ENCODE measurements at regions of chr2 and their contacts with region 1.

Region 1: DNA sequence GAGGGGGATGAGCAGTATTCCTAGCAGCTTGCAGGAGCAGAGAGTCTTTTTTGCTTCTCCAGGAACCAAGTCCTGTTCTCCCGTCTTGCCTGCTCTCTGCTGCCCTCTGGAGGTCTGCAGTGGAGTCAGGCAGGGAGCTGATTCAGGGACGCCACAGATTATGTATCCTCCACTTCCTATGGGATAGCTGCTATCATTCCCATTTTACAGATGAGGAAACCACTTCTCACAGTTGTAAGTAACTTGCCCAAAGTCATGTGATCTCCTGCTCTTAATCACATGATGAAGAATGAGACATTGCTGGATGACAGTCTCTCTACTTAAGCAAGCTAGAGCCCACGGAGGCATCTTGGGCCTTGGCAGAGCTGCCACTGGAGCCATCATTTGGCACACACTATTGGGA is 8.3 kb downstream of the SLC4A5 start:
- DNase-seq: peak; percentile 17
- ATAC-seq: peak; percentile 95
- H3K4me3 ChIP-seq: no peak overlapping the region
- H3K27ac ChIP-seq: no peak overlapping the region
- H3K4me1 ChIP-seq: no peaks in the 10 kb centered on the region
- H3K27me3 ChIP-seq: no peaks in the 10 kb centered on the region
- CTCF ChIP-seq: peak; percentile 88 to 97 (median 89)
- EP300 ChIP-seq: no peak
- POLR2A ChIP-seq: no peak
- RAD21 ChIP-seq: peak; percentile 90

Region 2: GRCh38 chr2:74267068-74267467 is 67.9 kb before region 1 on chr2:
- CTCF ChIA-PET with region 1: interaction called, 88 read pairs
- POLR2A ChIA-PET with region 1: no interaction called
- RAD21 ChIA-PET with region 1: interaction called, 17 read pairs
- SMC1A ChIA-PET with region 1: interaction called, 30 read pairs
- in situ Hi-C with region 1: no loop called
- intact Hi-C with region 1: loop called (anchors 1 kb)
- DNase-seq: no peak
- ATAC-seq: peak; percentile 96
- H3K4me3 ChIP-seq: no peak overlapping the region
- H3K27ac ChIP-seq: no peak overlapping the region
- H3K4me1 ChIP-seq: no peaks in the 10 kb centered on the region
- H3K27me3 ChIP-seq: no peaks in the 10 kb centered on the region
- CTCF ChIP-seq: peak; percentile 54 to 75 (median 62)
- EP300 ChIP-seq: no peak
- POLR2A ChIP-seq: no peak
- RAD21 ChIP-seq: peak; percentile 70

Region 3: DNA sequence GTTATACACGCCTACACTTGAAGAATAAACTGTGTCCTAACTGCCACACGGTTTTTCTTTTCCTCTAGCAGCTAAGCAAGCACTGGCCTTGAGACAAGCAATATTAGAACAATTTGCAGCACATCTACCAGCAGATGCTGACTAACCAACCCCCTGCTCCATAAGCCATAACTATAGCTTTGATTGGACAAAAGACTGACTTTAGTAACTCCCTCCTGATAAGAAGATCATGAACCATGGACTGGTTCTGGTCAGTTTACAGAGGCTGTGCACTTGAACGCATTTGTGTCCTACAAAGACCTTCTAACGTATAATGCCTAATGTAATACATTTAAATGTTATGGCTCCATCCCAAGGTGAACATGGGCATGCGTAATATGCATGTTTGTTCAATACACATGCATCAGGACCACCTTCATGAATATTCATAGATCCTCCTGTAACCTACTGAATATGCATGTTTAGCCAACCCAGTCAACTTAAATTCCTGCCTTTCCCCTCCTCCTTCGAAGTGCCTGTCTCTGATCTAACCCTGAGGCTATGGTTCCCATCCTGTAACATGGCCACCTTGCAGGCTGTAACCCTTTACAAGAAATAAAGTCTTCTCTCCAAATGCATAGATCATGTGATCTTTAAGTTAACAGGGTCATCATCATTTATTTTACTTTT is 18.2 kb before region 1 on chr2:
- CTCF ChIA-PET with region 1: interaction called, 33 read pairs
- POLR2A ChIA-PET with region 1: no interaction called
- RAD21 ChIA-PET with region 1: no interaction called
- SMC1A ChIA-PET with region 1: interaction called, 6 read pairs
- in situ Hi-C with region 1: no loop called
- intact Hi-C with region 1: no loop called
- DNase-seq: no peak
- ATAC-seq: no peak
- H3K4me3 ChIP-seq: no peak overlapping the region
- H3K27ac ChIP-seq: no peak overlapping the region
- H3K4me1 ChIP-seq: no peaks in the 10 kb centered on the region
- H3K27me3 ChIP-seq: no peaks in the 10 kb centered on the region
- CTCF ChIP-seq: no peak
- EP300 ChIP-seq: no peak
- POLR2A ChIP-seq: no peak
- RAD21 ChIP-seq: no peak

Region 4: GRCh38 chr2:74357627-74358026 is 22.7 kb after region 1 on chr2:
- CTCF ChIA-PET with region 1: interaction called, 52 read pairs
- POLR2A ChIA-PET with region 1: no interaction called
- RAD21 ChIA-PET with region 1: interaction called, 3 read pairs
- SMC1A ChIA-PET with region 1: interaction called, 18 read pairs
- in situ Hi-C with region 1: no loop called
- intact Hi-C with region 1: no loop called
- DNase-seq: no peak
- ATAC-seq: no peak
- H3K4me3 ChIP-seq: no peak overlapping the region
- H3K27ac ChIP-seq: no peak overlapping the region
- H3K4me1 ChIP-seq: no peaks in the 10 kb centered on the region
- H3K27me3 ChIP-seq: no peaks in the 10 kb centered on the region
- CTCF ChIP-seq: no peak
- EP300 ChIP-seq: no peak
- POLR2A ChIP-seq: no peak
- RAD21 ChIP-seq: no peak

Region 5: DNA sequence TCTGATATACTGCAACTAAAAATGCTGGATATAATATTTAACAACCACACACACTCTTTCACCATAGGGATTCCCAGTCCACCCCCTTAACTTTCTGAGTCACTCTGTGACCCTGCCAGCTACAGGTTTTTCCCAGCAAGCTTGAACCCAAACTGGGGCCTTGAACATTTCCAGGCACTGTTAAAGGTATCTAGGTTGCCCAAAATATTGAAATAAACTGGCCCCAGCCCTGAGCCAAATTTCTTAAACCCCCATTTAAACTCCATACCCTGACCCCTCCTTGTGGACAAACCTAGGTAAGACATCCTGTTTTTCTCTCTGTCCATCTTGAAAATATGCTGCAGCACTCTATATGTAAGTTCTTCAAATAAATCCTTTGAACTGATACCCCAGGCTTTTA is 64.9 kb after region 1 on chr2:
- CTCF ChIA-PET with region 1: interaction called, 12 read pairs
- POLR2A ChIA-PET with region 1: no interaction called
- RAD21 ChIA-PET with region 1: interaction called, 7 read pairs
- SMC1A ChIA-PET with region 1: interaction called, 9 read pairs
- in situ Hi-C with region 1: no loop called
- intact Hi-C with region 1: no loop called
- DNase-seq: no peak
- ATAC-seq: peak; percentile 92
- H3K4me3 ChIP-seq: no peak overlapping the region
- H3K27ac ChIP-seq: no peak overlapping the region
- H3K4me1 ChIP-seq: no peaks in the 10 kb centered on the region
- H3K27me3 ChIP-seq: no peaks in the 10 kb centered on the region
- CTCF ChIP-seq: peak; percentile 49 to 67 (median 60)
- EP300 ChIP-seq: no peak
- POLR2A ChIP-seq: no peak
- RAD21 ChIP-seq: peak; percentile 74

Measured in GM12878 (cell line).